Esophagus muscularis mucosa (tissue), 4 donors: ENCODE measurements at regions of chr9 and their contacts with region 1.

Region 1: DNA sequence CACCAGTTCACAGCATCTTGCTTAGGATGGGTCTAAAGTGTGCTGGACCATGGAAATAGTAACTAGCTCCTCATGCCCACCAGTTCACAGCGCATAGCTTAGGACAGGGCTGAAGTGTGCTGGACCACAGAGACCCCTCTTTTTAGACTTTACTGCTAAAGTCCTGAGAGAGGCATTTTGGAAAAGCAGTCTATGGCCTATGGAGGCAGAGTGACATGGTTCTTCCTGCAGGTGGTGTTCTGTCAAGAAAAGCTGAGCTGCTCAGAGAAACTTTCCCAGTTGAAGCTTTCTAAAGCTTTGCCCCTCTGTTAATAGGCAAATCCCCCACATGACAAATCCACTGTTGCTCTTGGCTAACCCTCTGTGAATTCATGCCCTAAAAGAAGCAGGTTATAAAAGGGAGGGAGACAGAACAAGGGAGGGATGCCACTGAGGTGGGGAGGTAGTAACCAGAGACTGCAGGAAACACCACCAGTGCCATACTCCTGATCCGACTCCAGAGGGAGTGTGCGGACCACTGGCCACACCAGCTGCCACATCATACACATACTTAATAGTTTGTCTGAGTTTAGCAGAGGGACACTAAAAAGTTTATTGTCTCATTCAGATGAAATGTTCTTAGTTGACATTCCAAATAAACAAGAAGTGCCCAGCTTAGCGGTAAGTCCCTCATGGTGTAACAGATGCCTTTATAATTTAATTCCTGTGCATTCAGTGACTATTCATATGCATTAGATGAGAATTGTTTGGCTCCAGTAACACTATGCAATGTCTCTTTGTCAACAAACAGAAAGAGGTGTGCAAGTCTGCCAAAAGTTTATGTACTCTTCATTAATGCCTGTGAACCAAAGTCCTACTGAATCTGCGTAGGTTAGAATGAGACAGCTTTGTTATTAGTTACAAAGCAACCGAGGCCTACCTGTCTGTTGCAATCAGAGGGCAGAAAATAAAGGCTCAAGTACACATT is 236.2 kb upstream of the NFIL3 start:
- DNase-seq: peak; percentile 66
- H3K4me3 ChIP-seq: no peak overlapping the region
- H3K27ac ChIP-seq: no peak overlapping the region
- H3K4me1 ChIP-seq: no peaks in the 10 kb centered on the region
- H3K27me3 ChIP-seq: no peaks in the 10 kb centered on the region
- CTCF ChIP-seq: peak; percentile 47 to 51 (median 50)
- EP300 ChIP-seq: no peak
- POLR2A ChIP-seq: no peak

Region 2: GRCh38 chr9:91716815-91717214 is 57.0 kb after region 1 on chr9:
- intact Hi-C with region 1: no loop called
- DNase-seq: no peak
- H3K4me3 ChIP-seq: no peak overlapping the region
- H3K27ac ChIP-seq: no peak overlapping the region
- H3K4me1 ChIP-seq: peaks cover 0 to 22% (median 8%) of the 10 kb centered on the region in 4 donors
- H3K27me3 ChIP-seq: no peaks in the 10 kb centered on the region
- CTCF ChIP-seq: no peak
- EP300 ChIP-seq: no peak
- POLR2A ChIP-seq: no peak

Region 3: DNA sequence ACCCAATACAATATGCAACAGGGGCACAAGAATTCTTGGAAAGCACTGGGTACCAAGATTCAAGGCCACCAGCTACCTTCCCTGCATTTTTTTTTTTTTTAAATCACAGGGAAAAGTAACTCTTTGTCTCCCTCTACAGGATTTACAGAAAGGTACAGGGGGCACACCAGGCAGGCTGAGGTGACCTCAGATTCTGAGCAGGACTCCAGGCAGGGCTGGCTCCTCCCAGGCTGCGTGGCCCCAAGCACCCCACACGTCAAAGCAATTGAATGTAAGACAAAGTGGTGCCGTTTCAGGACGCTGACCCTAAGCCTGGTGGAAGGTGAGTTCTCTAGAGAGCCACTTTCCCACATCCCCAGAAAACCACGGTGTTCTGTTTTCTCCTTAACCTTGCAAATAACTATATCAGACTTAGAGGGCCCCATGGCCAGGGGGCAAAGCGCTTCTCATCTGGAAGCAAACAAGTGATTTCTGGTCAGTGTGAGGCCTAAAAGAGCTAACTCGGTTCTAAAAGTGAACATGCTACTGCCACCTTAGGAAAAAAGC is 67.6 kb after region 1 on chr9:
- intact Hi-C with region 1: loop called (anchors 5 kb)
- DNase-seq: no peak
- H3K4me3 ChIP-seq: no peak overlapping the region
- H3K27ac ChIP-seq: peak overlapping the region; percentile 43 to 67 (median 50)
- H3K4me1 ChIP-seq: peaks cover 8 to 30% (median 24%) of the 10 kb centered on the region in 4 donors
- H3K27me3 ChIP-seq: no peaks in the 10 kb centered on the region
- CTCF ChIP-seq: peak; percentile 69 to 79 (median 71)
- EP300 ChIP-seq: no peak
- POLR2A ChIP-seq: no peak